Activated CD4-positive, alpha-beta memory T cell treated with anti-CD3 and anti-CD28 coated beads for 36 hours (primary cell): ENCODE measurements at regions of chr10 and their contacts with region 1.

Region 1: DNA sequence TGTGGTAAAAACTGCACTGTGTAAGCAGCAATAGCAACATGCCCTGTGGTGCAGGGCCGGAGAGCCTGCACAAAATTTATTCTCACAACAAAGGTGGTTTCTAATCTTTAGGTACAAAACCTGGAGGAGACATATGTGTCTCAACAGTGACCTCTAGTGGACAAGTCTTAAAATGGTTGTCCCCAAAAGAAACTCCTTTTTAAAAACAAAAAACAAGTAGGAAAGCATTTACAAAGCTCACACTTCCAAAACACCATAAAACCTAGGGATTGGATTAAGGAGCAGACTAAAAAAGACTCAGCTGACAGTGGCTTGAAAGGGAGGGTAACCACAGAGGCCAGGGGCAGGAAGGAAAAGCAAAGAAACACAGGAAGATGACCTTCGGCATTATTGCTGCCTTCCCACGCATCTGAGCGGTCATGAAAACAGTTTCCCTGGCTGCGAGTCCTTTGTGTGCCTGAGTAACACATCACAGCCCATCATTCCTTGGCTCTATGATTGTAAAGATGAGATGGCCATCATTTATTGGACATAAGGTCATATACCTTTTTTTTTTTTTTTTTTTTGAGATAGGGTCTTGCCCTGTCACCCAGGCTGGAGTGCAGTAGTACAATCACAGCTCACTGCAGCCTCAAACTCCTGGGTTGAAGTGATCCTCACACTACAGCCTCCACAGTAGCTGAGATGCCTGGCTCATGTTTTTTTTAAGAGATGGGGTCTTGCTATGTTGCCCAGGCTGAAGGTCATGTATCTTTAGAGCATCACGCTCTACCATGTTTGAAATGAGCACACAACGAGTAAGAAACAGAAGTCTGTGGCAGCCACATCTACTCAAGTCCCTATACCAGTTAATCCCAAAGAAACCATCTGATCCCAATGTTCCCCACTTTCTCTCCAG is 39.5 kb downstream of the RSU1 start:
- DNase-seq: no peak
- H3K4me3 Mint-ChIP-seq: no peak overlapping the region
- H3K27ac Mint-ChIP-seq: peak overlapping the region; percentile 40
- H3K4me1 Mint-ChIP-seq: peaks cover 30% of the 10 kb centered on the region
- H3K27me3 Mint-ChIP-seq: no peaks in the 10 kb centered on the region

Region 2: GRCh38 chr10:16116404-16117304 is 661.1 kb before region 1 on chr10:
- CTCF ChIA-PET with region 1: no interaction called
- POLR2A ChIA-PET with region 1: no interaction called
- intact Hi-C with region 1: loop called (anchors 10 kb)
- DNase-seq: no peak
- H3K4me3 Mint-ChIP-seq: no peak overlapping the region
- H3K27ac Mint-ChIP-seq: no peak overlapping the region
- H3K4me1 Mint-ChIP-seq: no peaks in the 10 kb centered on the region
- H3K27me3 Mint-ChIP-seq: no peaks in the 10 kb centered on the region

Region 3: GRCh38 chr10:16520900-16521299 is 256.8 kb before region 1 on chr10:
- CTCF ChIA-PET with region 1: no interaction called
- POLR2A ChIA-PET with region 1: no interaction called
- intact Hi-C with region 1: loop called (anchors 10 kb)
- DNase-seq: peak; percentile 62
- H3K4me3 Mint-ChIP-seq: peak overlapping the region; percentile 52
- H3K27ac Mint-ChIP-seq: no peak overlapping the region
- H3K4me1 Mint-ChIP-seq: peaks cover 10% of the 10 kb centered on the region
- H3K27me3 Mint-ChIP-seq: peaks cover 27% of the 10 kb centered on the region

Region 4: GRCh38 chr10:16756561-16757222 is 21.0 kb before region 1 on chr10:
- CTCF ChIA-PET with region 1: no interaction called
- POLR2A ChIA-PET with region 1: no interaction called
- intact Hi-C with region 1: no loop called
- DNase-seq: no peak
- H3K4me3 Mint-ChIP-seq: no peak overlapping the region
- H3K27ac Mint-ChIP-seq: no peak overlapping the region
- H3K4me1 Mint-ChIP-seq: no peaks in the 10 kb centered on the region
- H3K27me3 Mint-ChIP-seq: no peaks in the 10 kb centered on the region

Region 5: DNA sequence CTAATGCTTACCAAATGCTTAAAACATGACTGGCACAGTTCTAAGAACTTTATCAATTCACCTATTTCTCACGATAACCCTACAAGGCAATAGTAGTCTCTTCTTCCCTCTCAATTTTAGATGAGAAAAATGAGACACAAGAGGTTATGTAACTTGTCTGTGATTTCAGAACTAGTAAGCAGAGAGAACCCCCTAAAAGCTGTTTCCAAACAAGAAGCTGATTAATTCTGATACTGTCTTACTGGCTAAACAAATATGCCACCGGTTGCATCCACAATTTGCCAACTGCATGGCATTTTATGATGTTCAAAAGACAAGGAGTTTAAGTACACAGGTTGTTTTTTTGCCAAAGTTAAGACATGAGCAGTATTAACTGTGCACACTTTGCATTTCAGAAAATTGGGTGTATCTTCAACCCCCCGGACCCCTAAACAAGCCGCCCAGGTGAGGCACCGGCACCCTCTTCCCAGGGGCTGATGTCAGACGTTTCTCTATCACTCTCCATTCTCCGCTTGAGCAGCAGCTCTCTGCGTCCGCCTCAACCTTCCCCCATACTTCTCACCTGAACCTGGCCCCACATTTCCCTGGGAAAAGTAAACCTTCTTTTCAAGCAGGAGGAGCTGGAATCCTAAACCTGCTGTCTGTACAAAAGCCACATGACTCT is 17.8 kb after region 1 on chr10:
- CTCF ChIA-PET with region 1: interaction called, 10 read pairs
- POLR2A ChIA-PET with region 1: no interaction called
- intact Hi-C with region 1: no loop called
- DNase-seq: no peak
- H3K4me3 Mint-ChIP-seq: no peak overlapping the region
- H3K27ac Mint-ChIP-seq: no peak overlapping the region
- H3K4me1 Mint-ChIP-seq: peaks cover 32% of the 10 kb centered on the region
- H3K27me3 Mint-ChIP-seq: no peaks in the 10 kb centered on the region

Region 6: DNA sequence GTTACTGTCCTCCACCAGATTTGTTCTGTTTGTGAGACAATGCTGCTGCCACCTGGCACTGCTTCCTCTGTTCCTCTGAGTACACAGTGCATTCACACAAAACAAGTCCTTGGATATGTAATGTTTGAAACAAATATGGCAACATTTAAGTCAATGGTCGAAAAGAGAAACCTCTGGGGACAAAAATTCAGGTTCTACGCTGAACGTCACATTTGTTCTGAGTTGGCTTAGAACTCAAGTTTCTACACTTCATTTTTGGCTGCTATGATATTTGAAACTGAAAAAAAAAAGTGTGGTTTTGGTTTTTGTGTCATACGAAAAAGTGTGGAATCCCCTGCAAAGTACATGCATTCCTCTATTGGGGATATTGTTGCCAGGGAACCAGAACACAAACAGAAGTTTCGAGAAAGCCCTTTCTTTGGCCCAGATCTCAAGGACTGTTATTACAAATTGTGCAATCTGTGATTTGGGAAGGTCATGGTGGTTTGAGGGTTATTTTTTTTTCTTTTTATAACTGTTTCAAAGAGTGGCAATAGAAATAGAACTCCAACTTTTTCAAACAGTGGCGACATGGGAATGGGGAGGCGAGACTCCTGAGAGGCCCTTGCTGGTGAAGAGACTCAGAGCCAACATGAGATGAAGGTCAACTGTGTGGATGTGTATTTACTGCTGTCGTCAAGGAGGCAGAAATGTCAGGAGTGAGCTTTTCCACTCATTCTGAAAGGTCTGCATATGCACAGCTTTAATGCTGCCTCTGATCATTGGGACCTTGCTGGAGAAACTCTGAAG is 224.4 kb after region 1 on chr10:
- CTCF ChIA-PET with region 1: no interaction called
- POLR2A ChIA-PET with region 1: no interaction called
- intact Hi-C with region 1: loop called (anchors 1 kb)
- DNase-seq: peak; percentile 43
- H3K4me3 Mint-ChIP-seq: no peak overlapping the region
- H3K27ac Mint-ChIP-seq: peak overlapping the region; percentile 63
- H3K4me1 Mint-ChIP-seq: peaks cover 43% of the 10 kb centered on the region
- H3K27me3 Mint-ChIP-seq: peaks cover 13% of the 10 kb centered on the region

Region 7: DNA sequence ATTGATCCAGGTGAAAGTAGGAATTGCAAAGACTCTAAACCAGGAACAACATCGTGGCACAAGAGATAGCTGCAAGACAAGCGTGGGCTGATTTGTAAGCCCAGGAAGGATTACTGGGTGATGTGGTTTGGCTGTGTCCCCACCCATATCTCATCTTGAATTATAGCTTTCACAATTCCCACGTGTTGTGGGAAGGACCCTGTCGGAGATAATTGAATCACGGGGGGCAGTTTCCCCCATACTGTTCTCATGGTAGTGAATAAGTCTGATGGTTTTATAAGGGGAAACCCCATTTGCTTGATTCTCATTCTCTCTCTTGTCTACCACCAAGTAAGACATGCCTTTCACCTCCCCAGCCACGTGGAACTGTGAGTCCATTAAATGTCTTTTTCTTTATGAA is 617.1 kb after region 1 on chr10:
- CTCF ChIA-PET with region 1: no interaction called
- POLR2A ChIA-PET with region 1: no interaction called
- intact Hi-C with region 1: no loop called
- DNase-seq: peak; percentile 25
- H3K4me3 Mint-ChIP-seq: no peak overlapping the region
- H3K27ac Mint-ChIP-seq: no peak overlapping the region
- H3K4me1 Mint-ChIP-seq: peaks cover 8% of the 10 kb centered on the region
- H3K27me3 Mint-ChIP-seq: peaks cover 16% of the 10 kb centered on the region